PC-9 (cell line): ENCODE measurements at regions of chr12 and their contacts with region 1.

Region 1: DNA sequence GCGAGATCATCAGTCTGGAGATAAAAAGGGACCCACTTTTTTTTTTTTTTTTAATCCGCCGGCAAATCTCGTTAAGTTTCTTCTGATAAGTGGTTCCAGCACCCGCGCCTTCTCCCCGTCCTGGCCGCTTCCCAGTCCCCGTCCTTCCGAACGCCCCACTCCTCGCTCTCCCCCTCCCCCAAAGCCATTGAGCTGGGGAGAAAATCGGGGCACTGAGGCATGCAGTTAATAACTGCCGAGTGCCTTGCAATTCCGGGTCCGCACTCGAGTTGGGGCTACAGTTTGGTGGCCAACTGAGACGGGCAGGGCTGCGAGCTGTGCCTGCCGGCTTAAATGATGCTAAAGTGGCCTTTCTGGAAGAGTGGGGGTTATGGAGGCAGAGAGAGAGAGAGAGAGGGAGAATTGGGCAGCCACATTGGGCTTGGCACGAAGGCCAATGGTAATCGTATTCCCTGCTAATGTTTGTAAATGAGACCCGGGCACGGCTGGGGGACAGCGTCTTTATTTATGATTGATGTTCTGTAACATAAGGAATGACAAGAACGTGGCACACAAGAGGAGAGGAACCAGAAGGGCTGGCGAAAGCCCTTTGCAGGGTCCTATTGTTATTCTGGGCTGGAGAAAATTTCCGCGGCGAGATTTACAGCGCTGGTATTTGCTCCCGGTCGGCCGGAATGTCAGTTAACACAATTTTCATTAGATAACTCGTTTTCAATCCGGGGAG is 115.4 kb upstream of the MYL2 start:
- DNase-seq: no peak
- H3K4me3 ChIP-seq: no peak overlapping the region
- H3K27ac ChIP-seq: no peak overlapping the region
- H3K4me1 ChIP-seq: no peaks in the 10 kb centered on the region
- H3K27me3 ChIP-seq: peaks cover 59% of the 10 kb centered on the region
- CTCF ChIP-seq: no peak

Region 2: GRCh38 chr12:110874781-110875180 is 161.0 kb before region 1 on chr12:
- CTCF ChIA-PET with region 1: interaction called, 12 read pairs
- POLR2A ChIA-PET with region 1: no interaction called
- intact Hi-C with region 1: no loop called
- DNase-seq: no peak
- H3K4me3 ChIP-seq: no peak overlapping the region
- H3K27ac ChIP-seq: no peak overlapping the region
- H3K4me1 ChIP-seq: no peaks in the 10 kb centered on the region
- H3K27me3 ChIP-seq: peaks cover 27% of the 10 kb centered on the region; the same call in 1 of the 2 replicates
- CTCF ChIP-seq: no peak

Region 3: GRCh38 chr12:111181143-111181726 is 145.5 kb after region 1 on chr12:
- CTCF ChIA-PET with region 1: no interaction called
- POLR2A ChIA-PET with region 1: no interaction called
- intact Hi-C with region 1: no loop called
- DNase-seq: no peak
- H3K4me3 ChIP-seq: no peak overlapping the region
- H3K27ac ChIP-seq: no peak overlapping the region
- H3K4me1 ChIP-seq: no peaks in the 10 kb centered on the region
- H3K27me3 ChIP-seq: peaks cover 97% of the 10 kb centered on the region
- CTCF ChIP-seq: no peak